Endothelial cell of umbilical vein (primary cell): ENCODE measurements at regions of chr16 and their contacts with region 1.

Region 1: DNA sequence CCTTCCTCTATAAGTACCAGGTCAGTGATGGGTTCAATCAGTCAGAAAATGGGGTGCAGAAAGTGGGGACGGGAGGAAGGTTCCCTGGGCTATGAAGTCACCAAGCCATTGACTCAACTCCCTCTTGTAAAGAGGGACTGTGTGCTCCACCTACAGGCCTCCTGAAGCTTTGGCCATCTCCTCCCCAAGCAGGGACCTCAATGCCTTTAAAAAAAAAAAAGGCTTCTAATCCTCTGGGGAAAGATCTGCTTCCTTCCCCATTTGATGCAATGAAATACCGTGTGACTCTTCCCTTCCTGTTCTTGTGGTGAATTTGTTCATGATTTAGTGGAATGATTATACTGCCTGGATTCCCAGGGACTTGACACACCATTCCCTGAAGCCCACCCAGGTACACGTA is 30.8 kb downstream of the VWA3A start:
- DNase-seq: no peak
- H3K4me3 ChIP-seq: no peak overlapping the region
- H3K27ac ChIP-seq: no peak overlapping the region
- H3K4me1 ChIP-seq: no peaks in the 10 kb centered on the region
- H3K27me3 ChIP-seq: peaks cover 0 to 3% of the 10 kb centered on the region in 2 experiments
- CTCF ChIP-seq: no peak
- POLR2A ChIP-seq: no peak

Region 2: GRCh38 chr16:22109258-22109898 is 13.8 kb before region 1 on chr16:
- CTCF ChIA-PET with region 1: no interaction called
- POLR2A ChIA-PET with region 1: no interaction called
- dilution Hi-C with region 1: no loop called
- intact Hi-C with region 1: no loop called
- DNase-seq: no peak
- H3K4me3 ChIP-seq: no peak overlapping the region
- H3K27ac ChIP-seq: no peak overlapping the region
- H3K4me1 ChIP-seq: no peaks in the 10 kb centered on the region
- H3K27me3 ChIP-seq: peaks cover 13 to 22% of the 10 kb centered on the region in 2 experiments
- CTCF ChIP-seq: no peak
- POLR2A ChIP-seq: no peak

Region 3: DNA sequence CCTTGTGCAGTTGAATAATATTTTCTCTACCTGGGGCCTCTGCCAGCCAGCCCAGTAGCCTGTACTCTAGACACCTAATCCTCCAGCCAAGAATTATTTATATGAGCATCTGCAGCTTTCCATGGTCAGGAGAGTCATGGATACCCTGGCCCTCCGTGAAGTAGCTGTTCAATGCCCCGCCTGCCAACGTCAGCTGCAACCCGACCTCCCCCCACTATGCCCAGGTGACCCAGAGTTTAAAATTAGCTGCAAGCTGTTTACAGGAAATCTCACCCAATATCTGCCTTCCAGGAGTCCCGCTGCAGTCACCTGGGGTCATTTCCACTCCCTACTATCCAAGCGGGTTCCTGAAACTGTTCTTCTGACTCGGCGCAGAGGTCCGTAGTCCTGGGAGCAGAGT is 51.5 kb after region 1 on chr16:
- CTCF ChIA-PET with region 1: no interaction called
- POLR2A ChIA-PET with region 1: no interaction called
- dilution Hi-C with region 1: no loop called
- intact Hi-C with region 1: loop called (anchors 5 kb)
- DNase-seq: no peak
- H3K4me3 ChIP-seq: no peak overlapping the region
- H3K27ac ChIP-seq: no peak overlapping the region
- H3K4me1 ChIP-seq: no peaks in the 10 kb centered on the region
- H3K27me3 ChIP-seq: no peaks in the 10 kb centered on the region
- CTCF ChIP-seq: no peak
- POLR2A ChIP-seq: no peak